Heart right ventricle (tissue), 16 donors: ENCODE measurements at regions of chr3 and their contacts with region 1.

Region 1: DNA sequence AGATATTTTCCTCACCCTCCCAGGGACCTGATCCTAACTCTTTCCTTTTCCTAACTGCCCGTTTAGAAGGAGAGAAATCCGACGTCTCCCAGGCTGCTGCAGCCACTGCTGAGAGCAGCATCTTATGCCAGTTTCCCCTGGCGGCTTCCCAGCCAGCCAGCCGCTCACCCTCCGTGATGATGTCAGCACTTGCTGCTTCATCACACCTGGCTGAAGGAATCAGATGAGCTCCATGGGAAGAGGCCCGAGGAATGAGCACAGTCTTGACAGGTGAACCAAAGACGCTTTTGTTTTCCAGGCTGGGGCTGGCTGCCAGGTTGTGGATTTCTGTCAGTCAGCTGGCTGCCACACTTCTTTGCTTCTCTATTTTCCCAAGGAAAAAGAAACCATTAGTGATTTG is 445.1 kb upstream of the RBMS3 start:
- DNase-seq: peak in 1 of 2 donors; percentile 12
- ATAC-seq: no peak
- H3K4me3 ChIP-seq: no peak overlapping the region
- H3K27ac ChIP-seq: no peak overlapping the region
- H3K4me1 ChIP-seq: no peaks in the 10 kb centered on the region
- H3K27me3 ChIP-seq: peaks cover 0 to 8% (median 5%) of the 10 kb centered on the region in 7 donors
- CTCF ChIP-seq: no peak

Region 2: GRCh38 chr3:28877912-28878311 is 42.2 kb after region 1 on chr3:
- intact Hi-C with region 1: no loop called
- DNase-seq: no peak
- ATAC-seq: no peak
- H3K4me3 ChIP-seq: no peak overlapping the region
- H3K27ac ChIP-seq: no peak overlapping the region
- H3K4me1 ChIP-seq: peaks cover 0 to 9% (median 0%) of the 10 kb centered on the region in 9 donors
- H3K27me3 ChIP-seq: no peaks in the 10 kb centered on the region
- CTCF ChIP-seq: no peak

Region 3: DNA sequence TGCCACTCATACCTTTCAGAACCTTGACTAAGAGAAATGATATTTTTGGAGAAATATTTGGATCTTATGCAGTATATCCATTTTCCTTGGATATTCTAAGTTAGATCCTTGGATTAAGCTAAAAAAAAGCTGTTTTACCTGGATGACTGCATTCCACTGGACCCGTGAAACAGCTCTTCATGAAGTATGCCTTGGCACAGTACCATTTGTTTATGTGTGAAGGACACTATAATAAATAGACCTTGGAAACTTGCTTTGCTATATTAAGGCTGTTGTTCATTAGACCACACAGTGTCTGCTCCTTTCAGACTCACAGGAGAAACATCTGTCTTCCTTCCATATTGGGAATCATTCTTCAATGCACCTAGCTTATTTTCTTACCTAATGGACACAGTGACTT is 1119.7 kb after region 1 on chr3:
- intact Hi-C with region 1: loop called in 1 of 10 experiments (anchors 5 kb)
- DNase-seq: no peak
- ATAC-seq: no peak
- H3K4me3 ChIP-seq: no peak overlapping the region
- H3K27ac ChIP-seq: no peak overlapping the region
- H3K4me1 ChIP-seq: peaks cover 0 to 5% (median 0%) of the 10 kb centered on the region in 9 donors
- H3K27me3 ChIP-seq: no peaks in the 10 kb centered on the region
- CTCF ChIP-seq: no peak